AG04450 (cell line): ENCODE measurements at regions of chr1 and their contacts with region 1.

Region 1: GRCh38 chr1:162541619-162542141 is 19.8 kb upstream of the UAP1 start:
- DNase-seq: peak; percentile 87
- H3K4me3 ChIP-seq: no peak overlapping the region
- H3K27ac ChIP-seq: peak overlapping the region; percentile 89
- H3K27me3 ChIP-seq: no peaks in the 10 kb centered on the region
- CTCF ChIP-seq: no peak

Region 2: GRCh38 chr1:162347292-162347691 is 194.4 kb before region 1 on chr1:
- CTCF ChIA-PET with region 1: no interaction called
- POLR2A ChIA-PET with region 1: no interaction called
- DNase-seq: no peak
- H3K4me3 ChIP-seq: no peak overlapping the region
- H3K27ac ChIP-seq: no peak overlapping the region
- H3K27me3 ChIP-seq: no peaks in the 10 kb centered on the region
- CTCF ChIP-seq: no peak

Region 3: GRCh38 chr1:162502928-162503327 is 38.8 kb before region 1 on chr1:
- CTCF ChIA-PET with region 1: no interaction called
- POLR2A ChIA-PET with region 1: interaction called, 10 read pairs
- DNase-seq: peak; percentile 39
- H3K4me3 ChIP-seq: no peak overlapping the region
- H3K27ac ChIP-seq: peak overlapping the region; percentile 73
- H3K27me3 ChIP-seq: no peaks in the 10 kb centered on the region
- CTCF ChIP-seq: no peak

Region 4: GRCh38 chr1:162561037-162561616 is 19.4 kb after region 1 on chr1:
- CTCF ChIA-PET with region 1: interaction called, 3 read pairs
- POLR2A ChIA-PET with region 1: interaction called, 11 read pairs
- DNase-seq: peak; percentile 87
- H3K4me3 ChIP-seq: peak overlapping the region; percentile 83
- H3K27ac ChIP-seq: peak overlapping the region; percentile 95
- H3K27me3 ChIP-seq: no peaks in the 10 kb centered on the region
- CTCF ChIP-seq: no peak